Activated CD4-positive, alpha-beta T cell treated with anti-CD3 and anti-CD28 coated beads for 36 hours (primary cell): ENCODE measurements at regions of chr14 and their contacts with region 1.

Region 1: GRCh38 chr14:100285021-100285912 is 21.0 kb downstream of the SLC25A29 start:
- DNase-seq: peak; percentile 88
- ATAC-seq: peak; percentile 89
- H3K4me3 Mint-ChIP-seq: peak overlapping the region; percentile 68
- H3K27ac Mint-ChIP-seq: no peak overlapping the region
- H3K4me1 Mint-ChIP-seq: peaks cover 7% of the 10 kb centered on the region
- H3K27me3 Mint-ChIP-seq: no peaks in the 10 kb centered on the region

Region 2: GRCh38 chr14:100306420-100307219 is 21.4 kb after region 1 on chr14 and contains the start of gene SLC25A29:
- CTCF ChIA-PET with region 1: interaction called, 4 read pairs
- POLR2A ChIA-PET with region 1: no interaction called
- intact Hi-C with region 1: loop called in 1 of 2 experiments (anchors 1 kb)
- DNase-seq: peak; percentile 80
- ATAC-seq: peak; percentile 90
- H3K4me3 Mint-ChIP-seq: peak within 1 kb of the TSS; percentile 63
- H3K27ac Mint-ChIP-seq: no peak within 1 kb of the TSS
- H3K4me1 Mint-ChIP-seq: peaks cover 7% of the 10 kb centered on the region
- H3K27me3 Mint-ChIP-seq: peaks cover 14% of the 10 kb centered on the region
- total RNA-seq, gene SLC25A29: 5.4 to 5.8 TPM

Region 3: GRCh38 chr14:100317912-100318808 is 32.9 kb after region 1 on chr14:
- CTCF ChIA-PET with region 1: interaction called, 4 read pairs
- POLR2A ChIA-PET with region 1: interaction called, 3 read pairs
- intact Hi-C with region 1: loop called in 1 of 2 experiments (anchors 1 kb)
- DNase-seq: peak; percentile 85
- ATAC-seq: peak; percentile 98
- H3K4me3 Mint-ChIP-seq: peak overlapping the region; percentile 50
- H3K27ac Mint-ChIP-seq: peak overlapping the region; percentile 63
- H3K4me1 Mint-ChIP-seq: peaks cover 7% of the 10 kb centered on the region
- H3K27me3 Mint-ChIP-seq: no peaks in the 10 kb centered on the region

Region 4: GRCh38 chr14:100362311-100362927 is 77.2 kb after region 1 on chr14:
- CTCF ChIA-PET with region 1: no interaction called
- POLR2A ChIA-PET with region 1: no interaction called
- intact Hi-C with region 1: no loop called
- DNase-seq: no peak
- ATAC-seq: no peak
- H3K4me3 Mint-ChIP-seq: no peak overlapping the region
- H3K27ac Mint-ChIP-seq: no peak overlapping the region
- H3K4me1 Mint-ChIP-seq: peaks cover 37% of the 10 kb centered on the region
- H3K27me3 Mint-ChIP-seq: no peaks in the 10 kb centered on the region